A549 (cell line): ENCODE measurements at regions of chr4 and their contacts with region 1.

Region 1: GRCh38 chr4:7042697-7043464 is at the start of gene TADA2B:
- DNase-seq: peak; percentile 94 to 95
- ATAC-seq: peak; percentile 93 to 97
- H3K4me3 ChIP-seq: peak within 1 kb of the TSS; percentile 99
- H3K27ac ChIP-seq: peak within 1 kb of the TSS; percentile 96 to 98
- H3K4me1 ChIP-seq: peaks cover 8% of the 10 kb centered on the region; the same call in 2 of the 3 replicates
- CTCF ChIP-seq: peak; percentile 57
- EP300 ChIP-seq: no peak
- POLR2A ChIP-seq: peak; percentile 47
- RAD21 ChIP-seq: no peak
- polyA plus RNA-seq, gene TADA2B: 6.0 and 6.7 TPM in 2 replicates

Region 2: DNA sequence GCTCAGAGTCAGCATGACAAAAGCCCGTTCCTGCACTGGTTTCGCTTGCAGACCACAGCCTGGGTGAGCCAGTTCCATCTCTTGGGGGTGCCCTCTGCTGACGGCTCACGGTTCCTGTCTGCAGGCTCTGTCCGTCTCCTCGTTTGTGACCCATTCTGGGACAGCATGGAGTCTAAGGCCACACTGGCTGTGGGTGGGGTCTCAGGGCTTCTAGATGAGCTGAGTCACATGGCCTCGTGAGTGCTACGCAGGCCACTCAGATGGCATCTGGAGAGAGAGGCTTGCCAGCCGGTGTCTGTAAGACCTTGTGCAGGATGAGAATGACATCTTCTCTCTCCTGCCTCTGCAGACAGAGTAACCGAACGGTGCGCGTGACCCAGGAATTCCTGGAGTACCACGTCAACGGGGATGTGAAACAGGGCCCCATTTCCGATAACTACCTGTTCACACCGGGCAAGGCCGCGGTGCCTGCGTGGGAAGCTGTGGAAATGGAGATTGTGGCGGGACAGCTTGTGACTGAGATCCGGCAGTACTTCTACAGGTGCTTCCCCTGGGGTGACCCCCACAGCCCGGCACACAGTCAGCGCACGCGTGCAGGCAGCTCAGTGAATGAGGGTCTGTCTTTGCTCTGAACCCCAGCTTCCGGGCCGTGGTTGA is 434.0 kb before region 1 on chr4:
- CTCF ChIA-PET with region 1: no interaction called
- POLR2A ChIA-PET with region 1: no interaction called
- DNase-seq: peak in 1 of 2 experiments; percentile 10
- ATAC-seq: peak in 1 of 2 experiments; percentile 50; a peak in 3 of 6 replicates
- H3K4me3 ChIP-seq: no peak overlapping the region
- H3K27ac ChIP-seq: no peak overlapping the region
- H3K4me1 ChIP-seq: no peaks in the 10 kb centered on the region
- CTCF ChIP-seq: no peak
- EP300 ChIP-seq: no peak
- POLR2A ChIP-seq: no peak
- RAD21 ChIP-seq: no peak

Region 3: DNA sequence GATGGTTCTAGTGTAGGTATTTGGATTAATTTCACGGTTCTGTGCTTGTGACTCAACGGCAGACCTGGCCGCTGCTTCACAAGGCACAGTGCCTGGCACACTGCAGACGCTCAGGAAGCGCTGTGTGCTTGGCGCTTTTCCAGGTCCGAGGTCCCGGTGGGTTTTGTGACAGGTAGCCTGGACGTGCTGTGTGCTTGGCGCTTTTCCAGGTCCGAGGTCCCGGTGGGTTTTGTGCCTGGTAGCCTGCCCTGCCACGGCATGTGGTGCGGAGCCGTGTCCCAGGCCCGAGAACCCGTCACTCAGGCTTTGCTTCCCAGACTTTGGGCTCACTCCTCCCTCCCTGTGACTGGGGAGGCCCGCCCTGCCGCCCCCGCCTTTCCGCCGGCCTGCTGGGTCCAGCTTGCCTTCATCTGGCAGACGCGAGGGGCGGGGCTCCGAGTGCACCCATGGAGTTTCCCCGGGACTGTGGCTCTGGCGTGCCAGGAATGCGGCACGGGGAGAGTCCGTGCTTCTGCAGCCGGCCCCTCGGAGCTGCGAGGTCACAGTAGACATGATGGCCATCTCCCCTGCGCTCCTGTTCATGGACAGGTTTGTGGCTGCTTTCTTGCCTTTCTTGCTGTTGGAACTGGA is 89.0 kb before region 1 on chr4:
- CTCF ChIA-PET with region 1: no interaction called
- POLR2A ChIA-PET with region 1: no interaction called
- DNase-seq: no peak
- ATAC-seq: no peak
- H3K4me3 ChIP-seq: no peak overlapping the region
- H3K27ac ChIP-seq: no peak overlapping the region
- H3K4me1 ChIP-seq: peaks cover 15% of the 10 kb centered on the region
- CTCF ChIP-seq: no peak
- EP300 ChIP-seq: no peak
- POLR2A ChIP-seq: no peak
- RAD21 ChIP-seq: no peak

Region 4: DNA sequence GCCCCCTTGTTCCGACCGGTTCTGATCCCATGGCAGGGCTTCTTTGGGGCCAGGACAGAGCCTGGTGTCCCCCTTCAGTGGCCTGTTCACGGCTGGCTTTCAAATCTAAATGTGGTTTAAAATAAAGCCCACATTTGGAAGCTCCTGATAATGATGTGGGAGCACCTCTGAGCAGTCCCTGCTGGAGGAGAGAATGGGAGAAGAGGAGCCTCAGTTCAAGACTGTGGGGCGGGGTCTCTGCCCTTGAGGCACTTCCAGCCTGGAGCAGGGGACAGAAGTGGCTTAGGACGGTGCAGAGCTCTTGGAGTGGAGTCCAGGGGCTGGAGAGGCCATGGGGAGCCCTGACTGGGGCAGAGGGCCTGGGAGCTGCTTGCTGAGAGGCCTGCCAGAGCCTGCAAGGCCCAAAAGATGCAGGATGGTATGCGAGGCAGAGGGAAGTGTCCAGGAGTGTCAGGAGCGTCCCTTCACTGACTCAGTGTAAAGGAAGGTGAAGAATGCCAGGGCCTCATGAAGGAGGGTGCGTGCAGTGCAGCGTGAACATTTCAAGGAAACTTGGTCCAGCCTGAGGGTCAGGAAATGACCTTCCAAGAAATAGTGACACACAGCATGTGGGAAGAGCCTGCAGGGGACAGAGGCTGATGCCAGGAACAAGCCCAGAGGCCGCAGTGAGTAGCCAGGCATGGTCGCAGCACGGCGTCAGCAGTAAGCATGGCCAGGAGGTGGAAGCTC is 20.8 kb before region 1 on chr4:
- CTCF ChIA-PET with region 1: interaction called, 14 read pairs
- POLR2A ChIA-PET with region 1: no interaction called
- DNase-seq: peak; percentile 69 to 78
- ATAC-seq: peak; percentile 93 to 95
- H3K4me3 ChIP-seq: no peak overlapping the region
- H3K27ac ChIP-seq: peak overlapping the region; percentile 71 to 93
- H3K4me1 ChIP-seq: peaks cover 37% of the 10 kb centered on the region
- CTCF ChIP-seq: no peak
- EP300 ChIP-seq: no peak
- POLR2A ChIP-seq: no peak
- RAD21 ChIP-seq: no peak

Region 5: GRCh38 chr4:7052923-7053715 is 10.2 kb after region 1 on chr4:
- CTCF ChIA-PET with region 1: interaction called, 16 read pairs
- POLR2A ChIA-PET with region 1: interaction called, 5 read pairs
- DNase-seq: no peak
- ATAC-seq: no peak
- H3K4me3 ChIP-seq: no peak overlapping the region
- H3K27ac ChIP-seq: no peak overlapping the region
- H3K4me1 ChIP-seq: no peaks in the 10 kb centered on the region
- CTCF ChIP-seq: no peak
- EP300 ChIP-seq: no peak
- POLR2A ChIP-seq: no peak
- RAD21 ChIP-seq: no peak